ENCODE measurements at regions of chr6 and their contacts with region 1.

Region 1: DNA sequence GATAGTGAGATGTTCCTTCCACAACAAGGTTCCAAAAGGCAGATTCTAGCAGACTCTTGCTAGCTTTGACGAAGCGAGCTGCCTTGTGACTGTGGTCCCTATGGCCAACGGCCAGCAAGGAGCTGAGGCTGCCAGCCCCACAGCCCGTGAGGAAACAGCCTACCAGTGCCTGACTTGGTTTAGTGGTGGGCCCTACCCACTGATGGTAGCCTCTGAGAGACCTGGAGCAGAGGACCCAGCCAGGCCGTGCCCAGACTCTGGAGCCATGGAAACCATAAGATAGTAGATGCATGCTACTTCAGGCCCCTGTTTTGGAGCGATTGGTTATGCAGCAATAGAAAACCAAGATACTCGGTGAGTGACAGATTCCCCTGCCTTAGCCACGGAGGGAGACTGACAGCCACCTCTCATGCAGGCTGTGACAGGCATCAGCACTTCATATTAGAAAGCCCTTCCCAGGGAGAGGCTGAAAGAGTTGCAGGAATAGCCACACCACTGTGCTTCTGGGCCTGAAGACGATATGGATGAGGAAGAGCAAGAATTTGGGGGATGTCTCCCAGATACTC is 19.2 kb downstream of the PSMG4 start:
- DNase-seq: no peak
- H3K4me3 Mint-ChIP-seq: no peak overlapping the region
- H3K27ac Mint-ChIP-seq: no peak overlapping the region
- H3K4me1 Mint-ChIP-seq: no peaks in the 10 kb centered on the region
- H3K27me3 Mint-ChIP-seq: no peaks in the 10 kb centered on the region
- CTCF ChIP-seq: no peak

Region 2: DNA sequence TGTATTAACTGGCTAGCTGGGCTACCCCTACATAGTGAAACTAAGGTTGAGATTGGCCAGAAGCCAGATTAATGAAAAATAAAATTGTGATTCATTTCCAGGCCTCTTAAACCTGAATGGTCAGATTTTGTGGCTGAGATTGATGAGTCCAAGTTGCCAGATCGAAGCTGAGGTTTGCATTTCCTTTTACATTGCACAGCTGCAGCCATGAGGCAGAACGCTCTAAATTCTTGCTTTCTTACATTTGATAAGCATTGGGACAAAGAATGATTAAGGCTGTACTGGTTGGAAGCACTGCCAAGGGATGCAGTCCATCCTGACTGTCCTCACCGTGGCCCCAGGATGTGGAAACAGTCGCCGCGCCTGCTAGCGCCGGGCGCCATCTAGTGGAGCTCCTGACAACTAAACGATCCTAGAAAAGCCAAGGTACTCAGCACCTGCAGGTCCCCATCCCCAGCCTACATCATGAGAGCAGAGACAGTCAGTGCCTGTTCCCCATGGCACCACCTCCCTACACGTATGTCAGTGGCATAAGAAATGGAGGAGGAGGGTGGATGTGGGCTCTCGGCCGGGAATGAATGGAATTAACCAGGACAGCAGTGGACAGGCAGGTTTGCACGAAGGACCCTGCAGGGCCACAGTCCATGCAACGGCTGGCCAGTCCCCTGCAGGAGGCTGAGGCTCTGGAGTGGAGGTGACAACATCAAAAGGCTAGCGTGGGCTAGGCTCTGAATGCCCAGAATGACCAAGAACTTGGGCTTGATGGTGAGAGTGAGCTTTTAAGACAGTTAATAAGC is 454.6 kb after region 1 on chr6:
- CTCF ChIA-PET with region 1: interaction called, 9 read pairs
- intact Hi-C with region 1: loop called (anchors 1 kb)
- DNase-seq: peak; percentile 71
- H3K4me3 Mint-ChIP-seq: no peak overlapping the region
- H3K27ac Mint-ChIP-seq: no peak overlapping the region
- H3K4me1 Mint-ChIP-seq: peaks cover 14% of the 10 kb centered on the region
- H3K27me3 Mint-ChIP-seq: no peaks in the 10 kb centered on the region
- CTCF ChIP-seq: peak; percentile 82